CD8-positive, alpha-beta T cell (primary cell): ENCODE measurements at regions of chr19 and their contacts with region 1.

Region 1: GRCh38 chr19:9584073-9584833 is at the start of gene ZNF121:
- DNase-seq: peak; percentile 57 to 89 (median 81)
- ATAC-seq: peak; percentile 75
- H3K4me3 ChIP-seq: peak within 1 kb of the TSS; percentile 95 to 98
- H3K4me3 Mint-ChIP-seq: peak within 1 kb of the TSS; percentile 95
- H3K27ac ChIP-seq: peak within 1 kb of the TSS; percentile 96 to 97
- H3K27ac Mint-ChIP-seq: peak within 1 kb of the TSS; percentile 95
- H3K4me1 ChIP-seq: peaks cover 21% of the 10 kb centered on the region
- H3K4me1 Mint-ChIP-seq: peaks cover 39% of the 10 kb centered on the region
- H3K27me3 ChIP-seq: no peaks in the 10 kb centered on the region
- H3K27me3 Mint-ChIP-seq: peaks cover 2% of the 10 kb centered on the region
- CTCF ChIP-seq: no peak
- total RNA-seq, gene ZNF121: 40.6 to 43.2 TPM

Region 2: GRCh38 chr19:9309139-9309973 is 274.9 kb before region 1 on chr19 and contains the start of gene ZNF699:
- CTCF ChIA-PET with region 1: interaction called, 5 read pairs
- POLR2A ChIA-PET with region 1: no interaction called
- intact Hi-C with region 1: loop called in 1 of 2 experiments (anchors 5 kb)
- DNase-seq: peak; percentile 96 to 99 (median 98)
- ATAC-seq: peak; percentile 90
- H3K4me3 ChIP-seq: peak within 1 kb of the TSS; percentile 86 to 100
- H3K4me3 Mint-ChIP-seq: peak within 1 kb of the TSS; percentile 94
- H3K27ac ChIP-seq: peak within 1 kb of the TSS; percentile 86
- H3K27ac Mint-ChIP-seq: peak within 1 kb of the TSS; percentile 96
- H3K4me1 ChIP-seq: peaks cover 13% of the 10 kb centered on the region
- H3K4me1 Mint-ChIP-seq: peaks cover 34% of the 10 kb centered on the region
- H3K27me3 ChIP-seq: no peaks in the 10 kb centered on the region
- H3K27me3 Mint-ChIP-seq: no peaks in the 10 kb centered on the region
- CTCF ChIP-seq: no peak
- total RNA-seq, gene ZNF699: 15.1 to 16.0 TPM

Region 3: GRCh38 chr19:9538183-9539058 is 45.8 kb before region 1 on chr19 and contains the start of gene ZNF426:
- CTCF ChIA-PET with region 1: interaction called, 4 read pairs
- POLR2A ChIA-PET with region 1: no interaction called
- intact Hi-C with region 1: loop called (anchors 2 kb)
- DNase-seq: peak; percentile 77 to 92 (median 86)
- ATAC-seq: peak; percentile 94
- H3K4me3 ChIP-seq: peak within 1 kb of the TSS; percentile 89 to 93
- H3K4me3 Mint-ChIP-seq: peak within 1 kb of the TSS; percentile 99
- H3K27ac ChIP-seq: peak within 1 kb of the TSS; percentile 91
- H3K27ac Mint-ChIP-seq: peak within 1 kb of the TSS; percentile 100
- H3K4me1 ChIP-seq: peaks cover 17% of the 10 kb centered on the region
- H3K4me1 Mint-ChIP-seq: peaks cover 35% of the 10 kb centered on the region
- H3K27me3 ChIP-seq: no peaks in the 10 kb centered on the region
- H3K27me3 Mint-ChIP-seq: no peaks in the 10 kb centered on the region
- CTCF ChIP-seq: no peak
- total RNA-seq, gene ZNF426: 16.6 to 17.9 TPM

Region 4: GRCh38 chr19:9621156-9622037 is 37.1 kb after region 1 on chr19 and contains the start of gene ZNF561:
- CTCF ChIA-PET with region 1: interaction called, 3 read pairs
- POLR2A ChIA-PET with region 1: no interaction called
- intact Hi-C with region 1: loop called (anchors 1 to 2 kb)
- DNase-seq: peak; percentile 77 to 97 (median 91)
- ATAC-seq: peak; percentile 85
- H3K4me3 ChIP-seq: peak within 1 kb of the TSS; percentile 81 to 97
- H3K4me3 Mint-ChIP-seq: peak within 1 kb of the TSS; percentile 95
- H3K27ac ChIP-seq: peak within 1 kb of the TSS; percentile 91 to 94
- H3K27ac Mint-ChIP-seq: peak within 1 kb of the TSS; percentile 99
- H3K4me1 ChIP-seq: peaks cover 15% of the 10 kb centered on the region
- H3K4me1 Mint-ChIP-seq: peaks cover 27% of the 10 kb centered on the region
- H3K27me3 ChIP-seq: no peaks in the 10 kb centered on the region
- H3K27me3 Mint-ChIP-seq: no peaks in the 10 kb centered on the region
- CTCF ChIP-seq: no peak
- total RNA-seq, gene ZNF561: 35.5 to 39.8 TPM

Region 5: DNA sequence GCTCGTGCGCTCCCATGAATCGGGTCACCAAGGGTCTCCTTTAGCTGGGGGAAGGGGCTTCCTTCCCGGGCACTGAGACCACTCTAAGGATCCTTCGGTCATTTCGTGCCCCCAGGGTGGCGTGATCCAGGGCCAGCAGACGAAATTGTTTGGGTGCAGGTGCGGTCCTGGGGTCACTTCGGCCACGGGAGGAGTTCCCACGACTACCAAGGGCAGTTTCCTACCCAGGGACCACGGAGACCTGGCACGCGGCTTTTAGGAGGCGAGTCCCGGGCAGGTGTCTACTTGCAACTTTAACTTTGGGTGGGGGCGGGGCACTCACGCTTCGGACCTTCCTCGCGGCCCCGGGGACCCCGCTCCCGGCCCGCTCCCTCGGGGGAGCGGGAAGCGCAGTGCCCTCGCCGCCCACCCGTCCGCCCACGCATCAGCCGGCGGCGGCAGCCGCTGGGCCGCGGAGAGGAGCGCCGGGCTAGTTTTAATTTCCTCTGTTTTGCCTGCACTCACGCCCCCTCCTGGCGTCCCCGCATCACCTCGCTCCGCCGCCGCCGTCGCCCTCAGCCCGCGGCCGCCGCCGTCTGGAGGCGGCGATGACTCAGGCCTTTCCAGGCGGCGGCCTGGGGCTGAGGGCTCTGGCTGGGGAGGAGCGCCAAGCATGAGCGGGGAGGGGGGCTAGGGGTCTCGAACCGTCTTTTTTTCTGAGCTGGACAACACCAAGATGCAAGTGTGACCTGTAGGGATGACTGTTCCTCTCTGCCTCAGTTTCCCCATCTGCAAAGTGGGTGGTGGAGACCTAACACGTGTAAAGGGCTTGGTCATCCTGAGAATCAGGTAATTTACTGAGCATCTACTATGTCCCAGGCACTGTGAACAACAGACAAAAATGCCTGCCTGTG is 330.3 kb after region 1 on chr19:
- CTCF ChIA-PET with region 1: no interaction called
- POLR2A ChIA-PET with region 1: no interaction called
- intact Hi-C with region 1: loop called (anchors 5 kb)
- DNase-seq: peak; percentile 69 to 89 (median 81)
- ATAC-seq: peak; percentile 92
- H3K4me3 ChIP-seq: peak overlapping the region; percentile 49 to 66
- H3K4me3 Mint-ChIP-seq: peak overlapping the region; percentile 73
- H3K27ac ChIP-seq: no peak overlapping the region
- H3K27ac Mint-ChIP-seq: no peak overlapping the region
- H3K4me1 ChIP-seq: peaks cover 15% of the 10 kb centered on the region
- H3K4me1 Mint-ChIP-seq: peaks cover 8% of the 10 kb centered on the region
- H3K27me3 ChIP-seq: peaks cover 0 to 15% of the 10 kb centered on the region in 2 experiments
- H3K27me3 Mint-ChIP-seq: peaks cover 30% of the 10 kb centered on the region
- CTCF ChIP-seq: peak; percentile 73